Panc1 (cell line): ENCODE measurements at regions of chr3 and their contacts with region 1.

Region 1: GRCh38 chr3:156382458-156383346 is 172.2 kb downstream of the SSR3 start:
- DNase-seq: peak; percentile 17
- ATAC-seq: peak; percentile 85
- H3K4me3 ChIP-seq: no peak overlapping the region
- H3K27ac ChIP-seq: no peak overlapping the region
- H3K4me1 ChIP-seq: no peaks in the 10 kb centered on the region
- H3K27me3 ChIP-seq: peaks cover 27% of the 10 kb centered on the region; the same call in 1 of the 2 replicates
- CTCF ChIP-seq: peak; percentile 82

Region 2: GRCh38 chr3:156151824-156152428 is 230.8 kb before region 1 on chr3:
- CTCF ChIA-PET with region 1: interaction called, 14 read pairs
- POLR2A ChIA-PET with region 1: no interaction called
- in situ Hi-C with region 1: no loop called
- intact Hi-C with region 1: loop called (anchors 1 kb)
- DNase-seq: peak; percentile 28
- ATAC-seq: peak; percentile 85
- H3K4me3 ChIP-seq: no peak overlapping the region
- H3K27ac ChIP-seq: no peak overlapping the region
- H3K4me1 ChIP-seq: no peaks in the 10 kb centered on the region
- H3K27me3 ChIP-seq: no peaks in the 10 kb centered on the region
- CTCF ChIP-seq: peak; percentile 92